Psoas muscle (tissue), 8 donors: ENCODE measurements at regions of chr3 and their contacts with region 1.

Region 1: DNA sequence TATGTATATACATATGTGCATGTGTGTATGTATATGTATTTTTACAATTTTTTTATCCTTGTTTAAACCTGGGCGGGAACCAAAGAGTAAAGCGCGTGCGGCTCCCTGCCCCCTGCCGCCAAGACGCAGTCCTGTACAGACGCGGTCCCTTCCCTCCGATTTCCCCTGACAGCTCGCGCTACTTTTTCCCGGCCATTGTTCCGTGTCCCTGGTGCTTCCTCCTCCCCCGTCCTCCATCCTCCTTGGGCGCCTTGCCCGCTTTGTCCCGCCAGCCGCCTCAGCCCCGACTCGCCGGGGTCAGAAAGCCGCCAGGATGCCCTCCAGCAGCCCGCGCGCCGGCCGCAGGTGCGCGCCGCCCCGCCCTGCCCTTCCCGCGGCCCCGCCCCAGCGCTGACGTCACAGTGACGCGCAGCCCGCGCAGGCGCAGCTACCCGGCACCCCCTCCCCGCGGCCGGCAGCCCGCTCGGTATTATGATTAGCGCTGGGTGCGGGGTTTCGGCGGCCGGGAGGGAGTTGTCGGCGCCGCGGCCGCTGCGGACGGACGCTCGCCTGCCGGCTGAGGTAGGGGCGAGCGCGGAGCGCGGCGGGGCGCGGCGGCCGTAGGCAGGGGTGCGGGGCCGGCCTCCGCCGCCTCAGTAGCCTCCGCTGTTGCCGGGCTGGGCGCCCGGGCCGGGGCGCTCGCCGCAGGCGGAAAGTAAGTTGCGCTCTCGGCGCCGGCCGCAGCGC is at the start of gene SNRK:
- DNase-seq: peak; percentile 86 to 94
- ATAC-seq: peak; percentile 97 to 99 (median 98)
- H3K4me3 ChIP-seq: peak within 1 kb of the TSS; percentile 80
- H3K27ac ChIP-seq: peak within 1 kb of the TSS; percentile 92
- H3K4me1 ChIP-seq: peaks cover 45% of the 10 kb centered on the region
- H3K27me3 ChIP-seq: no peaks in the 10 kb centered on the region
- CTCF ChIP-seq: peak; percentile 24
- total RNA-seq, gene SNRK: 18.8 to 25.6 (median 21.5) TPM

Region 2: DNA sequence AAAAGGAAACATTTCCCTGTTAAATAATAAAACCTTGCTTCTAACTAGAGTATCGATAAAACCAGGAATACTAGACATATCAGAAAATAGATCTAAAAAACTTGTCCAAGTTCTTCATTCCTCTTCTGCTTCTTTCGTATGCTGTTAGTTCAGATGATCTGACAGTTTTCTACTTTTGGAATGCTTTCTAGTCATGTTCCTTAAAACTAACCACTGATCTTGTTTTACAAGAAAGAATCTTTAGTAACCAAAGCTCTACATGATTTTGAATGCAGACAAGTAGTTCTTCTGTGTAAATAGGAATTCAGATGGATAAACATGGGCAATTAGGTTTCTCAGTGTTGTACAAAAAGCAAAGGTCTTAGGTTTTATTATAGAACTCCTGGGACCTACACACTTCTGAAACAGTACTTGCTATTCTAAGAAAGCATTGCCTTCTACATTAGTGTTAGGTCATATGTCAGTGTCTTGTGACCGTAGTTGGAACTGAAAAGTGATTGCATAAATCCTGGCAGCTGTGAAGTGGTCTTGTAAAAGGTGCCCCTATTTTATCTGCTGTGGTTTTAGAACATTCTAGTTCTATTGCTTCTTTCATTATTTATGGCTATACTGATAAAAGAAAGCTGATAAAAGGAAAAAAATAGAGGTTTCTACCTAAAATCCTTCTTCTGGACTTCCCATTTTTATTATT is 40.8 kb after region 1 on chr3:
- intact Hi-C with region 1: loop called in 1 of 2 experiments (anchors 5 kb)
- DNase-seq: no peak
- ATAC-seq: peak; percentile 69 to 91 (median 80)
- H3K4me3 ChIP-seq: no peak overlapping the region
- H3K27ac ChIP-seq: peak overlapping the region; percentile 68
- H3K4me1 ChIP-seq: peaks cover 35% of the 10 kb centered on the region
- H3K27me3 ChIP-seq: no peaks in the 10 kb centered on the region
- CTCF ChIP-seq: no peak